ENCODE measurements at regions of chr19 and their contacts with region 1.

Region 1: DNA sequence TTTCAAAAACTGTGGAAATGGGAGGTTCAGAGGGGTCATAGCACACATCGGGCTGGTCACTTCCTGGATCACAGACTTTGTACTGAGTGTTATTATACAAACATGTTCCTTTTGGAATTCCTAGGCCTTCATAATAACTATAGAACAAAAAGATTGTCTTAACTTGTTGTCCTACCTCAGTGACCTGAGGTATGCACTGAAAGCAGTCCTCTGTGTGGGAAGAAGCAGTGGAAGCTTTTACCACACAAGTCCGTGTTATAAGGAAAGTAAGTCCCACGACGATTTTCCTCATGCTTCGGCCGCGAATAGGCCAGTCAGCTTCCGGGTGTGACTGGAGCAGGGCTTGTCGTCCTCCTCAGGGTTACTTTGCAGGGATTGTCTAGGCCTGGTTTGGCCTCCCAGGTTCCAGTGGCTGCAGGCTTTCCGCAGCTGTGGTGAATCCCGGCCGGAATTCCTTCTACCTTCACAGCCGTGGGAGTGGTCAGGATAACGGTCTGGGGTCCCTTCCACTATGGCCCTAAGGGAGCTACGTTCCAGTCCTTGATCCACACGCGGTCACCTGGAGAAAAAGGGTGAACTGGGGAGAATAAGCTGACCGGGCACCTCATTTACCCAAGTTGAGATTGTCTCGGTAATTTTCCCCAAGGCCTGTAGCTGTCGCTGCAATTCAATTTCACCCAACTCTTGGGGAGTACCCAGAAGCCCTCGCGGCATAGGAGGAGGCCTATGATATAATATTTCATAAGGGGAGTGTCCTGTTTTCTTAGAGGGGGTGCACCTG is 16.0 kb downstream of the NAPSA start:
- DNase-seq: no peak
- ATAC-seq: no peak

Region 2: DNA sequence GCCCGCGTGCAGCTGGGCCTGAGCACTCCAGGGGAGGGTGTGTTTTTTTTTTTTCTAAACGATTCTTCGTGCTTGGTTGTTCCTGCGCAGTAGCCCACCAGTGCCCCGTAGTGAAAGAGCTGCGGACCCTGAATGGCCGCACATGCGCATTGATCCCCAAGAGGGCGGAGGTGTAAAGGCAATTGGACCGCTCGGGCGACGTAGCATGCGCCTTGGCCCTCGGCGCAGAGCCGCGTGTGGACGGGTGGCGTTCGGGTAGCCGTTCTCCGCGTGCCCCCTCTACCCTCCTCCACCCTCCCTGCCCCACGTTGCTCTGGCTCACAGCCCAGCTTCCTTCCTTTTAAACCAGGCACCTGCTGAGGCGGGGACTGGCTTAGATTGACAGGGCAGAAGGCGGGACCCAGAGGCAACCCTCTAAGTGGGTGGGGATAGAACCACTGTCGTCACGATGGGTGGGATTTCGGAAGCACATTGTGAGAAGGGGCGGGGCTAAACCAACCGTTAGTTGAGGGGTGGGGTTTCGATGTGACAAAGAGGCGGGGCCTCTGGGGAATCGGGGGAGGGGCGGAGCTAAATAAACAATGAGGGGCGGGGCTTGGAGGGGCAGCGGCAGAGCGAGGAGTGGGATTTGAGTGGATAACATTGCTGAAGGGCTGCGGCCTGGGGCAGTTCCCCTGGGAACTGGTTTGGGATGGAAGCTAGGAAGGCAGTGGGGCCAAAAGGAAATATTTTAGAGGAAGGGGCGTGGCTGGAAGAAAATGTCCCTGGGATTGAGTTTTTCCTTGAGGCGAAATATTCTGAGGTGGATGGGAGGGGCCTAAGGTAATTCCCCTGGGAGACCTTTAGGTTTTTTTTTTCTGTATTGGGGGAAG is 419.6 kb before region 1 on chr19:
- intact Hi-C with region 1: no loop called
- DNase-seq: peak; percentile 96
- ATAC-seq: peak; percentile 94

Region 3: GRCh38 chr19:50329146-50329925 is 20.1 kb before region 1 on chr19 and contains the start of gene KCNC3:
- intact Hi-C with region 1: loop called (anchors 1 kb)
- DNase-seq: peak; percentile 96
- ATAC-seq: peak; percentile 91
- total RNA-seq, gene KCNC3: 2.7 TPM